Body of pancreas (tissue), 4 donors: ENCODE measurements at regions of chr22 and their contacts with region 1.

Region 1: GRCh38 chr22:44697423-44698141 is 4.4 kb upstream of the PRR5 start:
- DNase-seq: peak; percentile 81 to 89 (median 84)
- ATAC-seq: peak; percentile 41
- H3K4me3 ChIP-seq: no peak overlapping the region
- H3K27ac ChIP-seq: no peak overlapping the region
- H3K4me1 ChIP-seq: peaks cover 6% of the 10 kb centered on the region
- H3K27me3 ChIP-seq: no peaks in the 10 kb centered on the region
- CTCF ChIP-seq: peak; percentile 81 to 94 (median 91)
- POLR2A ChIP-seq: no peak

Region 2: GRCh38 chr22:44497218-44497904 is 200.2 kb before region 1 on chr22:
- intact Hi-C with region 1: no loop called
- DNase-seq: peak; percentile 25 to 40 (median 29)
- ATAC-seq: peak; percentile 18
- H3K4me3 ChIP-seq: peak overlapping the region; percentile 39 to 57
- H3K27ac ChIP-seq: peak overlapping the region; percentile 71 to 79 (median 74)
- H3K4me1 ChIP-seq: peaks cover 27% of the 10 kb centered on the region
- H3K27me3 ChIP-seq: no peaks in the 10 kb centered on the region
- CTCF ChIP-seq: no peak
- POLR2A ChIP-seq: no peak

Region 3: GRCh38 chr22:44735540-44736488 is 38.2 kb after region 1 on chr22:
- intact Hi-C with region 1: loop called (anchors 5 kb)
- DNase-seq: peak; percentile 68 to 86 (median 76)
- ATAC-seq: peak; percentile 67
- H3K4me3 ChIP-seq: no peak overlapping the region
- H3K27ac ChIP-seq: no peak overlapping the region
- H3K4me1 ChIP-seq: peaks cover 5% of the 10 kb centered on the region
- H3K27me3 ChIP-seq: no peaks in the 10 kb centered on the region
- CTCF ChIP-seq: peak; percentile 86 to 99 (median 95)
- POLR2A ChIP-seq: no peak